ENCODE measurements at regions of chr5 and their contacts with region 1.

Region 1: GRCh38 chr5:141641634-141642267 is 5.0 kb downstream of the RELL2 start:
- DNase-seq: no peak
- H3K4me3 Mint-ChIP-seq: no peak overlapping the region
- H3K27ac Mint-ChIP-seq: peak overlapping the region; percentile 62
- H3K4me1 Mint-ChIP-seq: peaks cover 26% of the 10 kb centered on the region
- H3K27me3 Mint-ChIP-seq: no peaks in the 10 kb centered on the region

Region 2: GRCh38 chr5:141597394-141597793 is 44.4 kb before region 1 on chr5:
- intact Hi-C with region 1: loop called (anchors 1 kb)
- DNase-seq: no peak
- H3K4me3 Mint-ChIP-seq: peak overlapping the region; percentile 32
- H3K27ac Mint-ChIP-seq: peak overlapping the region; percentile 47
- H3K4me1 Mint-ChIP-seq: peaks cover 56% of the 10 kb centered on the region
- H3K27me3 Mint-ChIP-seq: no peaks in the 10 kb centered on the region